CD4-positive, alpha-beta T cell (primary cell): ENCODE measurements at regions of chr14 and their contacts with region 1.

Region 1: GRCh38 chr14:24114536-24115450 is at the starts of genes DCAF11 and NRL:
- DNase-seq: peak; percentile 95 to 100 (median 98)
- ATAC-seq: peak; percentile 81
- H3K4me3 ChIP-seq: peak within 1 kb of the TSS; percentile 77
- H3K4me3 Mint-ChIP-seq: peak within 1 kb of the TSS; percentile 98
- H3K27ac ChIP-seq: peak within 1 kb of the TSS; percentile 98 to 99
- H3K27ac Mint-ChIP-seq: peak within 1 kb of the TSS; percentile 98
- H3K4me1 ChIP-seq: peaks cover 42% of the 10 kb centered on the region
- H3K4me1 Mint-ChIP-seq: peaks cover 35% of the 10 kb centered on the region
- H3K27me3 ChIP-seq: no peaks in the 10 kb centered on the region
- H3K27me3 Mint-ChIP-seq: no peaks in the 10 kb centered on the region
- CTCF ChIP-seq: no peak
- total RNA-seq, gene DCAF11: 74.8 to 75.3 TPM
- total RNA-seq, gene NRL: 1.6 to 1.9 TPM

Region 2: GRCh38 chr14:24051789-24052655 is 62.8 kb before region 1 on chr14 and contains the start of gene CARMIL3:
- CTCF ChIA-PET with region 1: no interaction called
- POLR2A ChIA-PET with region 1: interaction called, 17 read pairs
- intact Hi-C with region 1: no loop called
- DNase-seq: peak in 13 of 14 experiments; percentile 29 to 82 (median 51)
- ATAC-seq: peak; percentile 76
- H3K4me3 ChIP-seq: peak within 1 kb of the TSS; percentile 71
- H3K4me3 Mint-ChIP-seq: peak within 1 kb of the TSS; percentile 90
- H3K27ac ChIP-seq: no peak within 1 kb of the TSS
- H3K27ac Mint-ChIP-seq: no peak within 1 kb of the TSS
- H3K4me1 ChIP-seq: peaks cover 21% of the 10 kb centered on the region
- H3K4me1 Mint-ChIP-seq: peaks cover 14% of the 10 kb centered on the region
- H3K27me3 ChIP-seq: peaks cover 0 to 16% of the 10 kb centered on the region in 2 experiments
- H3K27me3 Mint-ChIP-seq: peaks cover 25% of the 10 kb centered on the region
- CTCF ChIP-seq: no peak
- total RNA-seq, gene CARMIL3: 0.05 to 0.11 TPM

Region 3: DNA sequence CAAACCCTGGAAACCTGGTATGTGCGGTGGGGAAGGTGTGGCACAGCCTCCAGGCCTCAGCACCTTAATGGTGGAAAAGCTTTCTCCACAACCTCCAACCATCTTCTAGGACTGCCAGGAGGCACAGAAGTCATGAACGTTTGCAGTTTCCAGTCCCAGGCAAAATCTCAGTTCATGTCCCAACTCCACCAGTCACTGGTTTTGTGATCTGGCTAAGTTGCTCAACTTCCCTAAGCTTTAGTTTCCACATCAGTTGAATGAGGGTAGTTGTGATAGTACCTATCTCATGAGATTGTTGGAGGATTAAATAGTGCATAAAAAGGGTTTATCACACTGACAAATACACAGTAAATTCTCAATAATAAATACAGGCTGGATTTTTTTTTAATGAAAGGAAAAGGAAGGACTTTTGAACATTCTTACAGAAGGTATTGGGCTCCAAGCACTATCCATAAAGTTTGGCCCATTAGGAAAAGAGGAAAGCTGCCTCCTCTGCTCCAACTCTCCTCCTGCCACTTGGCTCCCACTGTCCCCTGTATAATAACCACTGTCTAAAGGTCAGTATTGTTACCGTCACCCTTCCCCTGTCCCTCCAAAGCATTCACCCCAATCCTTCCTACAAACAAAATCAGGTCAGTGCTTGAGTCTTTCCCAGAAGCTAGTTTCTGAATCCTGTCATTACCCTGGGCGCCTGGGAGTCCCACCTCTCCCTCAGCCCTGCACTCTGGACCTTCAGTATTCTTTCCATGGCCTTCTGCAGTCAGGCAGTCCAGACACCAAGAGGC is 14.4 kb before region 1 on chr14:
- CTCF ChIA-PET with region 1: no interaction called
- POLR2A ChIA-PET with region 1: interaction called, 72 read pairs
- intact Hi-C with region 1: loop called in 1 of 2 experiments (anchors 2 kb)
- DNase-seq: no peak
- ATAC-seq: no peak
- H3K4me3 ChIP-seq: no peak overlapping the region
- H3K4me3 Mint-ChIP-seq: no peak overlapping the region
- H3K27ac ChIP-seq: no peak overlapping the region
- H3K27ac Mint-ChIP-seq: no peak overlapping the region
- H3K4me1 ChIP-seq: peaks cover 5% of the 10 kb centered on the region
- H3K4me1 Mint-ChIP-seq: peaks cover 13% of the 10 kb centered on the region
- H3K27me3 ChIP-seq: no peaks in the 10 kb centered on the region
- H3K27me3 Mint-ChIP-seq: no peaks in the 10 kb centered on the region
- CTCF ChIP-seq: no peak

Region 4: GRCh38 chr14:24146978-24147760 is 32.4 kb after region 1 on chr14 and contains the start of gene RNF31:
- CTCF ChIA-PET with region 1: interaction called, 15 read pairs
- POLR2A ChIA-PET with region 1: interaction called, 119 read pairs
- intact Hi-C with region 1: loop called in 1 of 2 experiments (anchors 2 kb)
- DNase-seq: peak; percentile 91 to 99 (median 97)
- ATAC-seq: peak; percentile 91
- H3K4me3 ChIP-seq: peak within 1 kb of the TSS; percentile 93
- H3K4me3 Mint-ChIP-seq: peak within 1 kb of the TSS; percentile 99
- H3K27ac ChIP-seq: peak within 1 kb of the TSS; percentile 76 to 82
- H3K27ac Mint-ChIP-seq: peak within 1 kb of the TSS; percentile 90
- H3K4me1 ChIP-seq: peaks cover 65% of the 10 kb centered on the region
- H3K4me1 Mint-ChIP-seq: peaks cover 61% of the 10 kb centered on the region
- H3K27me3 ChIP-seq: no peaks in the 10 kb centered on the region
- H3K27me3 Mint-ChIP-seq: no peaks in the 10 kb centered on the region
- CTCF ChIP-seq: no peak
- total RNA-seq, gene RNF31: 46.0 to 57.8 TPM

Region 5: DNA sequence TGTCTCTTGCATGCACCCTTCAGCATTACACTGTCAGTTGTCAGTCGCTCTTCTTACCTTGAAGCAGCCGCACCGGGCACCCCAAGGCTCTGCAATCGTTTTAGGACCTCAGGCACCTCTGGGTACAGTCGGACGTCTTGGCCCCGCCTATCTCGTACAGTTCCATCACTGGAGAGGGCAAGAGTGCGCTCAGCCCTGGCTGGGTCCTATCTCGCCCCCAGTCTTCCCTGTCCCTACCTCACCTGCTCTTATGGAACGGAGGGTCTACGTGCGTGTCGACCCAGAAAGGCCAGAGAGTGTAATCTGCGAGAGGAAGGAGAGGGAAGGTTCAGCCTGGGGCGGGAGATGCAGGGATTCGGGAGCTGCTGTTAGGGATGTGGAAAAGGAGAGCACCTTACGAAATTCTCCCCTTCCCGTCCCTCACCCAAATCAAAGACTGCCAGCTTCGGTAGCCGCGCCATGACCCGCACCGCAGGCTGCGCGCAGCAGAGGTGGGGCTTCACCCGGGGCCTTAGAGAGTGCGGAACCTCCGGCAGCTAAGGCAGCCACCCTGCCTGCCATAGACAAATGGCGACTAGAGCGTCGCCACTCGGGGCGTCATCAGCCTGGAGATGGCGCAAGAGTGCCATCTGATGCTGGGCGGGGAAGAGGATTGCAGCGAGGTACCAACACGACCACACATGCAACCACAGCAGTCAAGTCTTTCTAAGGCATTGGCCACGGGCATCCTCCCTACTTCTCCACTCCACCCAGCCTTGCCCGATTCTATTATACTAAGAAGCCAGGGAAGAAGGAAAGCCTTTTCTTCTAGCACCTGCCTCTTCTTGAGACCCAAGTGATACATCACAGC is 100.9 kb after region 1 on chr14 and contains the start of gene MDP1:
- CTCF ChIA-PET with region 1: interaction called, 3 read pairs
- POLR2A ChIA-PET with region 1: interaction called, 29 read pairs
- intact Hi-C with region 1: no loop called
- DNase-seq: peak; percentile 79 to 97 (median 86)
- ATAC-seq: peak; percentile 72
- H3K4me3 ChIP-seq: peak within 1 kb of the TSS; percentile 84
- H3K4me3 Mint-ChIP-seq: peak within 1 kb of the TSS; percentile 97
- H3K27ac ChIP-seq: peak within 1 kb of the TSS; percentile 92
- H3K27ac Mint-ChIP-seq: peak within 1 kb of the TSS; percentile 96
- H3K4me1 ChIP-seq: peaks cover 44% of the 10 kb centered on the region
- H3K4me1 Mint-ChIP-seq: peaks cover 49% of the 10 kb centered on the region
- H3K27me3 ChIP-seq: no peaks in the 10 kb centered on the region
- H3K27me3 Mint-ChIP-seq: no peaks in the 10 kb centered on the region
- CTCF ChIP-seq: peak; percentile 67
- total RNA-seq, gene MDP1: 3.2 to 3.7 TPM

Region 6: DNA sequence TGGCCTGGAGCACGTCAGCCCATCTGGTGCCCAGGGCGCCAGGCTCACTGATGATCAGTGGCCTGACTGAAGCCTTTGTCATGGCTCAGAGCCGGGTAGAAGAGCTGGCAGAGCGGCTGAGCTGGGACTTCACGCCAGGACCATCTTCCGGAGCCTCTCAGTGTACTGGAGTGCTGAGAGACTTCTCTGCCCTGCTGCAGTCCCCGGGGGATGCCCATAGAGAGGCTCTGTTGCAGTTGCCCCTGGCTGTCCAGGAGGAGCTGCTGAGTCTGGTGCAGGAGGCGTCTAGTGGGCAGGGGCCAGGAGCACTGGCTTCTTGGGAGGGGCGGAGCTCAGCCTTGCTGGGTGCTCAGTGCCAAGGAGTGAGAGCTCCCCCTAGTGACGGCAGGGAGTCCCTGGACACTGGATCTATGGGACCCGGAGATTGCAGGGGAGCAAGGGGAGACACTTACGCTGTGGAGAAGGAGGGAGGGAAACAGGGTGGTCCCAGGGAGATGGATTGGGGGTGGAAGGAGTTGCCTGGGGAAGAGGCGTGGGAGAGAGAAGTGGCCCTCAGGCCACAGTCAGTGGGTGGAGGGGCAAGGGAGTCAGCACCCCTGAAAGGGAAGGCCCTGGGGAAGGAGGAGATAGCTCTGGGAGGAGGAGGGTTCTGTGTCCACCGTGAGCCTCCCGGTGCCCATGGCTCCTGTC is 316.9 kb after region 1 on chr14:
- CTCF ChIA-PET with region 1: no interaction called
- POLR2A ChIA-PET with region 1: interaction called, 21 read pairs
- intact Hi-C with region 1: loop called in 1 of 2 experiments (anchors 10 kb)
- DNase-seq: peak; percentile 78 to 96 (median 86)
- ATAC-seq: peak; percentile 53
- H3K4me3 ChIP-seq: peak overlapping the region; percentile 80
- H3K4me3 Mint-ChIP-seq: peak overlapping the region; percentile 92
- H3K27ac ChIP-seq: peak overlapping the region; percentile 92 to 94
- H3K27ac Mint-ChIP-seq: peak overlapping the region; percentile 97
- H3K4me1 ChIP-seq: peaks cover 63% of the 10 kb centered on the region
- H3K4me1 Mint-ChIP-seq: peaks cover 64% of the 10 kb centered on the region
- H3K27me3 ChIP-seq: no peaks in the 10 kb centered on the region
- H3K27me3 Mint-ChIP-seq: no peaks in the 10 kb centered on the region
- CTCF ChIP-seq: peak; percentile 89